PC-9 (cell line): ENCODE measurements at regions of chr2 and their contacts with region 1.

Region 1: DNA sequence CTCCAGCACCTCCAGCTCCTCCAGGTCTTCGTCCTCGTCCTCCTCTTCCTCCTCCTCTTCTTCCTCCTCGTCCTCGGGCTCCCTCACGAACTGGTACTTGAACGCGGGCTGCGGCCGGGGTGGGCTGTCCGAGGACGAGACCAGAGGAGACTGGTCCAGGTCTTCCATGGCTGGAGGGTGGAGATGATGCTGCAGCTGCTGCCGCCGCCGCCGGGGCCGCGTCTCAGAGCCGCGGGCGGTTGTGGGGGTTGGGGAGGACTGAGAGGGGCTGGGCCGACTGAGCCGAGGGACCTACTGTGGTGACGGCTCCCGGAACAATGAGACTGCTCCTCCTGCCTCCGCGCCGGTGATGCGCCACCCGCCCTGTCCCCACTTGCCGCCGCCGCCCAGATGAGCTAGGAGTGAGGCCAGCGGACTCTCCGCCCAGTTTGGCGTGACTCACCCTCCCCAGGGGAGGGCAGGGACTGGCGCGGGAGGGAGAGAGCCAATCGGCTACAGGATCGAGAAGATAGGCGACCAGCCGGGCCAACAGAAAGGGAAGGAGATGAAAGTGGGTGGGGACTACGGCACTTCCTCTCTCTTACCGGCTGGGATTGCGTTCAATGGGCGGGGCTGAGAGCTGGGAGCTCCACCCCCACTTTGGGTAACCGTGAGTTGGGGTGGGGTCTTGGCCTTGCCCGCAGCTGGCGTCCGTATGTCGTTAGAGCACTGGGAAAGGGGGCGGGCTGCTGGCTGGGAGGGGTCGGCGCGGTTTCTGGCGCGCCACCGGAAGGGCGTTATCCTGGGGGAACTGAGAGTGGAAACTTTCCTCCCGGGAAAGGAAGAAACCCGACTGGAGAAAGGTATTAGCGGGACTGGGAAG is at the start of gene RTN4:
- DNase-seq: peak; percentile 99 to 100
- H3K4me3 ChIP-seq: peak within 1 kb of the TSS; percentile 93
- H3K27ac ChIP-seq: peak within 1 kb of the TSS; percentile 96
- H3K4me1 ChIP-seq: peaks cover 36% of the 10 kb centered on the region
- H3K27me3 ChIP-seq: no peaks in the 10 kb centered on the region
- CTCF ChIP-seq: 0 out of 2 replicates have a peak, but pooled peaks have one; percentile 27
- total RNA-seq, gene RTN4: 342 and 343 TPM in 2 replicates

Region 2: DNA sequence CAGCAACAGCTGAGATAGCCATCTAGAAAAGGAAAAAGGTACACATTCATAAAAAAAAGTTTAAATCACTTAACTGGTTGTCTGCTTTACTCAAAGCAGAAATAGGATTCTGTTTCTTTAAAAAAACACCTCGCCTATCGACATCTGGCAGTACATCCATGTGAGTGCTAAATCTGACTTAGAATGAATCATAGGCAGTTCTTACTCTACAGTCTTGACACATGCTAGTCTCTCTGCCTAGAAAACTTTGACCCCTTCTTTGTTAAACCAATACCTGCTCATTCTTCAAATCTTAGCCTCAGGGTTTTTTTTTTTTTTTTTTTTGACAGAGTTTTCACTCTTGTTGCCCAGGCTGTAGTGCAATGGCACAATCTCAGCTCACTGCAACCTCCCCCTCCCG is 1153.5 kb before region 1 on chr2:
- CTCF ChIA-PET with region 1: no interaction called
- POLR2A ChIA-PET with region 1: interaction called, 11 read pairs
- intact Hi-C with region 1: no loop called
- DNase-seq: peak in 1 of 2 experiments; percentile 42
- H3K4me3 ChIP-seq: no peak overlapping the region
- H3K27ac ChIP-seq: no peak overlapping the region
- H3K4me1 ChIP-seq: no peaks in the 10 kb centered on the region
- H3K27me3 ChIP-seq: no peaks in the 10 kb centered on the region
- CTCF ChIP-seq: no peak

Region 3: GRCh38 chr2:54723131-54723995 is 327.0 kb before region 1 on chr2 and contains the start of gene EML6:
- CTCF ChIA-PET with region 1: no interaction called
- POLR2A ChIA-PET with region 1: no interaction called
- intact Hi-C with region 1: loop called (anchors 2 kb)
- DNase-seq: peak; percentile 99
- H3K4me3 ChIP-seq: peak within 1 kb of the TSS; percentile 80
- H3K27ac ChIP-seq: peak within 1 kb of the TSS; percentile 56
- H3K4me1 ChIP-seq: peaks cover 33% of the 10 kb centered on the region
- H3K27me3 ChIP-seq: no peaks in the 10 kb centered on the region
- CTCF ChIP-seq: peak; percentile 36; the same call in 1 of the 2 replicates
- total RNA-seq, gene EML6: 3.7 and 6.7 TPM in 2 replicates

Region 4: GRCh38 chr2:54838585-54839035 is 211.8 kb before region 1 on chr2:
- CTCF ChIA-PET with region 1: no interaction called
- POLR2A ChIA-PET with region 1: no interaction called
- intact Hi-C with region 1: no loop called
- DNase-seq: peak; percentile 50 to 63
- H3K4me3 ChIP-seq: no peak overlapping the region
- H3K27ac ChIP-seq: no peak overlapping the region
- H3K4me1 ChIP-seq: no peaks in the 10 kb centered on the region
- H3K27me3 ChIP-seq: no peaks in the 10 kb centered on the region
- CTCF ChIP-seq: peak; percentile 98

Region 5: GRCh38 chr2:54977149-54977548 is 73.2 kb before region 1 on chr2:
- CTCF ChIA-PET with region 1: interaction called, 3 read pairs
- POLR2A ChIA-PET with region 1: interaction called, 4 read pairs
- intact Hi-C with region 1: loop called (anchors 5 kb)
- DNase-seq: no peak
- H3K4me3 ChIP-seq: no peak overlapping the region
- H3K27ac ChIP-seq: no peak overlapping the region
- H3K4me1 ChIP-seq: peaks cover 26% of the 10 kb centered on the region
- H3K27me3 ChIP-seq: no peaks in the 10 kb centered on the region
- CTCF ChIP-seq: no peak

Region 6: DNA sequence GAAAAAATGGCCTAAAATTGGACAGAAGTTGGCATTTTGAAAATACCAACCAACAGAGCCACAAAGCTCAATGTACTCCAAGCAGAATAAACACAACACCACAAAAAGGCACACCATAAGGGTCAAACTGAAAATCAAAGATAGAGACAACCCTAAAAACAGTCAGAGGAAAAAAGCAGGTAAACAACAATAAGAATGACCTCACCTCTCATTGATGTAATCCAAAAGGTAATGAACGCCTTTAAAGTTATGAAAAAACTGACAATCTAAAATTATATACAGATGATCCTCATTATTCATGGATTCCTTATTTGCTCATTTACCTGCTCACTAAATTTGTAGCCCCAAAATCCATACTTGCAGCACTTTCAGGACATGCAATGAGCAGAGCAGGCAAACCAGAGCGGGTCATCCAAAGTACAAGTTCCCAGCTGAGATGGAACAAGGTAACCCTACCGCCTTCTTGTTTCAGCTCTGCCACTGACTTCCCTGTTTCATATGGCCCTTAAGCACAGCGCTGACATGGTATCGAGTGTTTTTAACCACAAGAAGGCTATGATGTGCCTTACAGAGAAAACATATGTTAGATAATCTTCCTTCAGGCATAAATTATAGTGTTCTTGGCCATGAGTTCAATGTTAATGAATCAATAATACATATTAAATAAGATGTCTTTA is 17.2 kb before region 1 on chr2:
- CTCF ChIA-PET with region 1: interaction called, 3 read pairs
- POLR2A ChIA-PET with region 1: interaction called, 10 read pairs
- intact Hi-C with region 1: no loop called
- DNase-seq: no peak
- H3K4me3 ChIP-seq: no peak overlapping the region
- H3K27ac ChIP-seq: peak overlapping the region; percentile 7; the same call in 1 of the 2 replicates
- H3K4me1 ChIP-seq: peaks cover 59% of the 10 kb centered on the region
- H3K27me3 ChIP-seq: no peaks in the 10 kb centered on the region
- CTCF ChIP-seq: no peak

Region 7: DNA sequence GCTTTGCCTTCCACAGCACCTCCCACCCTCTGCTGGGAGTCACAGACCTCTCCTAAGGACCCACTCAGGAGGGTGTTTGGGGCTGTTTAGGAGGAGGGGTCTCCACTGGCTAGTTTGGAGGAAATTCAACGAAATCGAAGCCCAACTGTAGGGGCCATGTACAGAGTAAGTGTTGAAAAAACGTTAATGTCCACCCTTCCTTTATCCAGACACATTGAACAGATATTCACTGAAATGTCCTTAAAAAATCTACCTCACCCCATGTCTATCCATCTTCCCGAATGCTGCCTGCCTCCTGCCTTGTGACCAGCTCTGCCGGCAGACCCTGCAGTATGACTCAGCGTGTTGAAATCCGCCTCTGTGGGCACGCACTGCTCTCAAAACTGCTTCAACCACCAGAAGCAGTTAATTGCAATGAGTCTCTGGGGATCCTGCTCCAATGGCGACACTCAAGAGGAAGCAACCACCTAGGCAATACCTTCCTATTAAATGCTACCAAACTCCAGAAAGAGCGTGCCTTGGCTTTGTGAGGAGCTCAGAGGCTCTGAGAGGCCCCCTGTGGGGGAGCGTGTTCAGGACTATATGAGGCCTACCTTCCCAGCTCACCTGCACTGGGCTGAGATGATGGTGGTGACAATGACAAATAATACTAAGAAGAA is 61.3 kb after region 1 on chr2:
- CTCF ChIA-PET with region 1: interaction called, 3 read pairs
- POLR2A ChIA-PET with region 1: interaction called, 16 read pairs
- intact Hi-C with region 1: loop called (anchors 1 kb)
- DNase-seq: peak; percentile 77 to 96
- H3K4me3 ChIP-seq: peak overlapping the region; percentile 11; the same call in 1 of the 2 replicates
- H3K27ac ChIP-seq: peak overlapping the region; percentile 75
- H3K4me1 ChIP-seq: peaks cover 98% of the 10 kb centered on the region
- H3K27me3 ChIP-seq: no peaks in the 10 kb centered on the region
- CTCF ChIP-seq: no peak

Region 8: DNA sequence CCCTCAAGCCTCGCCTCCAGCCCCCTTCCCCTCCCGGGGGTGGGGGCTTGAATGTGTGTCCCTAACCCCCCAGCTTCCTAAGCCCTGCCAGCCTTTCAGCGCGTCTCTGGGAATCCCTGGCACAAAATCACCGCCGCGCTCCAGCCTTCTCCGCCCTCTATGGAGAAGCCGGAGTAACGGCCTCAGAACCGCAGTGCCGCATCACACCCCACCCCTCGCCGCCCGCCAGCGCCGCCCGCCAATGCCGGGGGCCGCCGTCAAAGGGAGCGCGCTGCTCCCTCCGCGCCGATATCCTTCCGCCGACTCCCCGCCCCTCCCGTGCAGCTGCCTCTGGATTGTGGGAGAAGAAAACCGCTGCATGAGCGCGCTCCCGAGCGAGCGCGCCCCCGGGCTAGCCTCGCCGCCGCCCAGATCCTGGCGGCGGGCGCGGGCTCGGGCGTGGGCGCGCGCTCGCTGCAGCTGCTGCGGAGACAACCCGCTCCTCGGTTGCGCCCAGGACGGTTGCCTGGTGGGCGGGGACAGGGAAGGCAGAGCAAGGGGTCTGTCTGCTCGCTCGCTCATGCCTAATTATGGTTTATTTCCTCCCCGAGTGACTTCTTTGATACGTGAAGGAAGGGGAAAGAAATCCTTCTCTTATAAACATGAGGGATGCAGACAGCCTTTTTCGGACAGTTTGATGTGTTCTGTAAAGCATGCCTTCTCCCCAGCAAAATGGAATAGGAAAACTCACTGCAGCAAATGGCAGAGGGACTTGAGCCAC is 369.5 kb after region 1 on chr2 and contains the start of gene CCDC88A:
- CTCF ChIA-PET with region 1: no interaction called
- POLR2A ChIA-PET with region 1: no interaction called
- intact Hi-C with region 1: loop called (anchors 2 kb)
- DNase-seq: peak; percentile 83 to 97
- H3K4me3 ChIP-seq: peak within 1 kb of the TSS; percentile 71
- H3K27ac ChIP-seq: no peak within 1 kb of the TSS
- H3K4me1 ChIP-seq: peaks cover 20% of the 10 kb centered on the region
- H3K27me3 ChIP-seq: no peaks in the 10 kb centered on the region
- CTCF ChIP-seq: peak; percentile 41; the same call in 1 of the 2 replicates
- total RNA-seq, gene CCDC88A: 12.0 and 12.3 TPM in 2 replicates

Region 9: GRCh38 chr2:55761526-55761925 is 711.2 kb after region 1 on chr2:
- CTCF ChIA-PET with region 1: no interaction called
- POLR2A ChIA-PET with region 1: no interaction called
- intact Hi-C with region 1: no loop called
- DNase-seq: no peak
- H3K4me3 ChIP-seq: no peak overlapping the region
- H3K27ac ChIP-seq: no peak overlapping the region
- H3K4me1 ChIP-seq: no peaks in the 10 kb centered on the region
- H3K27me3 ChIP-seq: no peaks in the 10 kb centered on the region
- CTCF ChIP-seq: no peak